ENCODE measurements at regions of chr6 and their contacts with region 1.

Region 1: GRCh38 chr6:32413427-32414047 is 6.6 kb upstream of the BTNL2 start:
- DNase-seq: peak; percentile 84
- H3K4me3 ChIP-seq: no peak overlapping the region
- H3K27ac ChIP-seq: no peak overlapping the region
- H3K4me1 ChIP-seq: peaks cover 8% of the 10 kb centered on the region
- H3K27me3 ChIP-seq: peaks cover 15 to 26% of the 10 kb centered on the region in 2 experiments
- CTCF ChIP-seq: peak; percentile 79 to 94
- POLR2A ChIP-seq: no peak

Region 2: GRCh38 chr6:32118782-32119628 is 294.5 kb before region 1 on chr6:
- CTCF ChIA-PET with region 1: no interaction called
- POLR2A ChIA-PET with region 1: no interaction called
- dilution Hi-C with region 1: no loop called
- intact Hi-C with region 1: loop called (anchors 10 kb)
- DNase-seq: peak; percentile 87
- H3K4me3 ChIP-seq: no peak overlapping the region
- H3K27ac ChIP-seq: no peak overlapping the region
- H3K4me1 ChIP-seq: no peaks in the 10 kb centered on the region
- H3K27me3 ChIP-seq: no peaks in the 10 kb centered on the region
- CTCF ChIP-seq: peak; percentile 92 to 96
- POLR2A ChIP-seq: no peak

Region 3: DNA sequence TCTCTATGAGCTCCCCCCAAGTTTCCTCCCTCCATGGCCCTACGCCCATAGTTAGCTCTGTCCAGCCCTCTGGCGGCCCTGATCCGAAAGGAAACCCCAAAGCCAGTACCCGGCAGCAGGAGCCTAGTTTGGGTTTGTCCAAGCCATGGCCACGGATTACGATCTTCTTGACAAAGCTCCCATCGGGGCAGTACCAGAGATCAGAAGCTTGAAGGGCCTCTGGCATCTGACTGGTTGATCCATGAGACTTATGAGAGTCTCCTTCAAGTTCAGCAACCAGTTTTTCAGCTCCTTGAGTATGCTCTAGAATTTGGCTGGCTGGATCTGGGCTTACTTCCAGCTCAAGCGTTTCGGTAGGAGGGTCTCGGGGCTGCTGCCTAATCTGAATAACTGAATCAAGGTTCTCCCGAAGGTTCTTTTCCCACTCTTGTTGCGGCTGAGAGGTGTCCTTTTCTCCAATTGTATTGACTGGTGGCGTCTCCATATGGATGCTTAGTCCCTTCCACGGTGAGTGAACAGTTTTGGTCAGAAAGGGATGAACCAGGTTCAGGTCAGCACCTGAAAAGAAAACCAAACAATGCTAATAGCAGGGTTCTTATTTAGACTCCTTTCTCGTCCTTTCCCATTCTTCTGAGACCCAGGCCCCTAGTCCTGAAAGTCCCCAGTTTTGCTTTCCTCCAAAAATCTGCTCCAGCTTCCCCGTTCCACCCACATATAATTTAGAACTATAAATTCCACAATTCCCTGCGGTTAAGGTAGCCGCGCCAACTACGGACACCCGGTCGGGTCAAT is 284.0 kb before region 1 on chr6:
- CTCF ChIA-PET with region 1: no interaction called
- POLR2A ChIA-PET with region 1: no interaction called
- dilution Hi-C with region 1: no loop called
- intact Hi-C with region 1: no loop called
- DNase-seq: no peak
- H3K4me3 ChIP-seq: peak overlapping the region; percentile 78 to 89 (median 84)
- H3K27ac ChIP-seq: peak overlapping the region; percentile 51
- H3K4me1 ChIP-seq: peaks cover 20% of the 10 kb centered on the region
- H3K27me3 ChIP-seq: peaks cover 0 to 2% of the 10 kb centered on the region in 2 experiments
- CTCF ChIP-seq: no peak
- POLR2A ChIP-seq: no peak

Region 4: GRCh38 chr6:32393665-32394420 is 19.7 kb before region 1 on chr6:
- CTCF ChIA-PET with region 1: interaction called, 3 read pairs
- POLR2A ChIA-PET with region 1: no interaction called
- dilution Hi-C with region 1: no loop called
- intact Hi-C with region 1: loop called (anchors 1 kb)
- DNase-seq: peak; percentile 99
- H3K4me3 ChIP-seq: no peak overlapping the region
- H3K27ac ChIP-seq: peak overlapping the region; percentile 86
- H3K4me1 ChIP-seq: peaks cover 13% of the 10 kb centered on the region
- H3K27me3 ChIP-seq: no peaks in the 10 kb centered on the region
- CTCF ChIP-seq: no peak
- POLR2A ChIP-seq: no peak

Region 5: GRCh38 chr6:32700391-32701040 is 287.0 kb after region 1 on chr6:
- CTCF ChIA-PET with region 1: interaction called, 42 read pairs
- POLR2A ChIA-PET with region 1: no interaction called
- dilution Hi-C with region 1: no loop called
- intact Hi-C with region 1: loop called (anchors 1 kb)
- DNase-seq: peak; percentile 67
- H3K4me3 ChIP-seq: no peak overlapping the region
- H3K27ac ChIP-seq: no peak overlapping the region
- H3K4me1 ChIP-seq: peaks cover 6% of the 10 kb centered on the region
- H3K27me3 ChIP-seq: peaks cover 15 to 40% of the 10 kb centered on the region in 2 experiments
- CTCF ChIP-seq: peak; percentile 41 to 64
- POLR2A ChIP-seq: no peak

Region 6: DNA sequence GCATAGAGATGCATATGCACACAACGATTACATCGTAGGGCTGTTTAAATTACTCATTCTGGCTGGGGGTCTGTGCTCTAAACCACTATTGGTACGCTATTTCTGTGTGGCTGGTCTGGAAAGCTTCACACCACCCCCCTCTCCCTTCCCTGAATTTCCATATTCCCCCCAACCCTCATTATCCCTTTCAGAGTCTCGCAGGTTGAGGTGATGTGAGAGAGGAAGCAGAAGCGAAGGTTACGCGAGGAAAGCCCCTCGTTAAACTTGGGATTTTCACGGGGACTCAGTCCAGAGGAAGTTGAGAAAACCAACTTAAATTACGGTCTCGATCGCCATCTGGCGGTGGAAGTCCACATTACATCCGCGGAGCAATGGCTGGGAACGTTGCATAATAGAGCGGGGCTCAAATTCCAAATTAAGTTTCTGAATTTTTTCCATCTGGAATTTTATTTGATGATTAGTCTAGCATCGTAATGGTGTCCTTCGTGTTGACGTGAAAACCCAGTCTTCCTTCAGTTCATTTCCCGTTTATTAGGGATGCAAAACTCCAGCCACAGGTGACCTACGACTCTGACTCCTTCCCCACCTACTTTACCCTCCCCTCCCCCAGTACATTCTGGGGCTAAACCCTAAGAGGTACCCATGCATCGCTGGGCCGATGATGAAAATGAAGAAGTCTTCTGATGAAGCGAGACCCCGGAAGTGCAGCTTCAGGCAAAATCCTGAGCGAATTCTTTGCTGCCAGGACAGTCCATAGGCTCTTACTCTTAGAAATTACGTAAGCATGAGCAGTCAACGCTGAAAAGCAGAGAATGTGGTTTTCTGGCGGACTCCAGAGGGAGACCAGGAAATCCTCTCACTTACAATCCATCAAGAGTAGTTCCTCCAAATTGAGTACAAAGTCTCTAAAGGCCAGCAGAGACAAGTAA is 383.6 kb after region 1 on chr6:
- CTCF ChIA-PET with region 1: interaction called, 10 read pairs
- POLR2A ChIA-PET with region 1: no interaction called
- dilution Hi-C with region 1: no loop called
- intact Hi-C with region 1: loop called (anchors 1 kb)
- DNase-seq: peak; percentile 65
- H3K4me3 ChIP-seq: peak overlapping the region in 1 of 3 experiments; percentile 19
- H3K27ac ChIP-seq: no peak overlapping the region
- H3K4me1 ChIP-seq: no peaks in the 10 kb centered on the region
- H3K27me3 ChIP-seq: peaks cover 40 to 67% of the 10 kb centered on the region in 2 experiments
- CTCF ChIP-seq: peak; percentile 77 to 82
- POLR2A ChIP-seq: no peak